Ascending aorta (tissue), 2 donors: ENCODE measurements at regions of chr6 and their contacts with region 1.

Region 1: DNA sequence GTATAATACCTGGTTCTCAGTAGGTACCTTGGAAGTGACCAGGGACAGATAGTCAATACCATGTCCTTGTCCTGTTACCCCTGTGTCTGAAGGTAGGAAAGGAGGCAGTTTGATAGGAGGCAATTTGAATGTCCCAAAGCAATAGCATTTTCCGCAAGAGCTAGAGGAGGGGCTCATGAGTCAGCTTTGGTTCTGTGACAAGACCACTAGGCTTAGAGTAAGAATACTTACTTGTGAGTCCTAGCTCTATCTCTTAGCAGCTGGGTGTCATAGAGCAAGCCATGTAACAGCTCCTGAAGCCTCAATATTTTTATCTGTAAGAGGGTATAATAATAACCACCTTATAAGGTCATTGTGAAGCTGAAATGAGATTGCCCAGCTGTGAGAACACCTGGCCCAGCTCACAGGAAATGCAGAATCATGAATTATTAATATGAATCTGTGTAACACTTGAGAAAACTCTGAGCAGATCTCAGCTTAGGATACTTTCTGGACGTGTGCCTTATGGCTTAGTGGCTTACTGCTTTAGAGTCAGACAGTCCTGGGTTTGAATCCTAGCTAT is 58.6 kb downstream of the DAAM2 start:
- DNase-seq: no peak
- H3K4me3 ChIP-seq: no peak overlapping the region
- H3K27ac ChIP-seq: peak overlapping the region; percentile 61 to 68
- H3K4me1 ChIP-seq: peaks cover 19 to 60% of the 10 kb centered on the region in 2 donors
- H3K27me3 ChIP-seq: no peaks in the 10 kb centered on the region
- CTCF ChIP-seq: no peak

Region 2: DNA sequence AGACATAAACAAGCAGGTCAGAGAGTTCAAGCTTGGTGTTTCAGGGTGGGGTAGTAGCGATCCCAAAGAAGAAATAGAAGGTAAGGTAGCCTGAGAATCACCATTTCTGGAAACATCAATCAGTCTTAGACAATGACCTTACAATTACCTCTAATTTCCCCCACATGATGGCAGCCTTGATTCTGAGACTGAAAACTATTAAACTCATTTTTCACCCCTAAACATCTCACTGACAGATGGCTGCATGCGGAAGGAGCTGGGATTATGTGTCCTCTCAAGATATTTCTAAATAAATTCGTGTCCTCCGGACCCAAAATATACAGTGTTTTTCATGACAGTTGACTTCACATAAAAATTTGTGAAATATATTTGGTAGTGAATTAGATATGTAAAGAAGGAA is 186.6 kb before region 1 on chr6:
- intact Hi-C with region 1: loop called (anchors 10 kb)
- DNase-seq: no peak
- H3K4me3 ChIP-seq: no peak overlapping the region
- H3K27ac ChIP-seq: no peak overlapping the region
- H3K4me1 ChIP-seq: no peaks in the 10 kb centered on the region
- H3K27me3 ChIP-seq: no peaks in the 10 kb centered on the region
- CTCF ChIP-seq: peak in 1 of 3 experiments; percentile 14

Region 3: GRCh38 chr6:39821742-39822532 is 28.9 kb before region 1 on chr6:
- intact Hi-C with region 1: loop called (anchors 5 kb)
- DNase-seq: no peak
- H3K4me3 ChIP-seq: peak overlapping the region; percentile 35 to 57
- H3K27ac ChIP-seq: peak overlapping the region; percentile 70 to 77
- H3K4me1 ChIP-seq: peaks cover 35 to 74% of the 10 kb centered on the region in 2 donors
- H3K27me3 ChIP-seq: no peaks in the 10 kb centered on the region
- CTCF ChIP-seq: no peak